ENCODE measurements at regions of chr3 and their contacts with region 1.

Region 1: DNA sequence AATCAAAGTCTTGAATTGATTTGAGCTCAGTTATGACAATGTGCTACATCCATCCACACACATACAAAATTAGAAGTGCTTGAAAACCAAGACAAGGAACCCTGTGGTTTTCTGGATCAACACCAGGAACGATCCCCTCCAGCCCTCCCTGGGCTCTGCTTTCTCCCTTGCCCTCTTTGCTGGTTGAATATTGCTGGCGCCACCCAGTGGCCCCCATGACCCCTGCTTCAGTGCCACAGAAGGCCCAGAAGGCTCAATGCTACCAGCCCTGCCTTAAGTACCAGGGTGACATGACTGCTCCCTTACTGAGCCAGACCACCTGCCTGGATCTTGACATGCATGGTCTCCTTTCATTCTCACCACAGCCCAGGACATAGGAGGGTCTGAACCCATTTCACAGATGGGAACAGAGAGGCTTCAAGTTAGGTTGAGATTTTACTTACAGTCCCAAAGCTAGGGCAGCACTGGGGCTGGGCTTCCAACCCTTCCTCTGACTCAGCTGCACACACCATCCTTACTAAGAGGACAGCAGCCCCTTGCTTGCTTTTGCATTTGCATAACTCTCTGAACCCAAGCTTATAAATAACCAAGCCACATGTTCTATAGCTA is 15.0 kb downstream of the IL12A start:
- DNase-seq: peak; percentile 79
- H3K4me3 ChIP-seq: no peak overlapping the region
- H3K27ac ChIP-seq: no peak overlapping the region
- H3K4me1 ChIP-seq: peaks cover 0 to 5% (median 0%) of the 10 kb centered on the region in 6 donors
- H3K27me3 ChIP-seq: no peaks in the 10 kb centered on the region
- CTCF ChIP-seq: peak; percentile 7 to 73 (median 59)
- POLR2A ChIP-seq: no peak

Region 2: GRCh38 chr3:159832024-159832423 is 171.6 kb before region 1 on chr3:
- intact Hi-C with region 1: loop called (anchors 5 kb)
- DNase-seq: no peak
- H3K4me3 ChIP-seq: no peak overlapping the region
- H3K27ac ChIP-seq: no peak overlapping the region
- H3K4me1 ChIP-seq: peaks cover 0 to 29% (median 8%) of the 10 kb centered on the region in 6 donors
- H3K27me3 ChIP-seq: no peaks in the 10 kb centered on the region
- CTCF ChIP-seq: no peak
- POLR2A ChIP-seq: no peak

Region 3: GRCh38 chr3:159884661-159885402 is 118.8 kb before region 1 on chr3:
- intact Hi-C with region 1: loop called (anchors 5 kb)
- DNase-seq: no peak
- H3K4me3 ChIP-seq: no peak overlapping the region
- H3K27ac ChIP-seq: no peak overlapping the region
- H3K4me1 ChIP-seq: peaks cover 0 to 37% (median 14%) of the 10 kb centered on the region in 6 donors
- H3K27me3 ChIP-seq: no peaks in the 10 kb centered on the region
- CTCF ChIP-seq: peak in 10 of 11 experiments; percentile 9 to 70 (median 58)
- POLR2A ChIP-seq: no peak

Measured in spleen (tissue), 13 donors.